ENCODE measurements at regions of chr5 and their contacts with region 1.

Region 1: DNA sequence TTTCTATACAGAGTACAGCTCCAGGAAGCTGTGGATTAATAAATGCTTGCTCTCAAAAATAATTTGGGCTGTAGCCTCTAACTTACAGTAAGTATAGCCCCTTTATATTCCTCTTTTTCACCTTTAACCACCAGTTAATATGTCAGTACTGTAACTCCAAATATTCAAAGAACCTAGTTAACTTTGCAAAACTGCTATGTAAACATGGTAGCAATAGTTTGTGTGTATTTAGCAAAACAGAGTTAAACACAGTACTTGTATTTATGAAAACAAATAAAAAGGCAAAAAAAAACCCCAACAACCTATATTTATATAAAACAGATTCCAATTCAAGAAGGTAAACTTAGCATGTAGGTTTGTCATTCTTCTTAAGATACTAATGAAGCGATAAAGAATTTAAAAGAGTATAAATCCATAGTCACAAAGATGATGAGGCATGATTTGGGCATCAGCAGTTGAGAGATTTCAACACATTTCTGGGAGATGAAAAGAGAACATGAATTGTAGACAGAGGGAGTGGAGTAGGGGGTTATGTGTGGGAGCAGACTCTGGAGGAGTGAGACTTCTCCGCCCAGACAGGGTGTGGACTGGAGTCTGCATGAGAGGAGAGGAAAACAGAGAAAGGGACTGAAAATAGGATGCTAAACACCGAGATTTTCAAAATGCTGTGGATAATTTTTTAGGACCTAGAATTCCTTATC is 47.0 kb upstream of the F2RL1 start:
- DNase-seq: no peak

Region 2: GRCh38 chr5:76601470-76601869 is 170.4 kb before region 1 on chr5:
- intact Hi-C with region 1: loop called (anchors 1 kb)
- DNase-seq: peak in 1 of 10 donors; percentile 22

Region 3: GRCh38 chr5:76801159-76801802 is 29.4 kb after region 1 on chr5:
- intact Hi-C with region 1: no loop called
- DNase-seq: no peak

Region 4: DNA sequence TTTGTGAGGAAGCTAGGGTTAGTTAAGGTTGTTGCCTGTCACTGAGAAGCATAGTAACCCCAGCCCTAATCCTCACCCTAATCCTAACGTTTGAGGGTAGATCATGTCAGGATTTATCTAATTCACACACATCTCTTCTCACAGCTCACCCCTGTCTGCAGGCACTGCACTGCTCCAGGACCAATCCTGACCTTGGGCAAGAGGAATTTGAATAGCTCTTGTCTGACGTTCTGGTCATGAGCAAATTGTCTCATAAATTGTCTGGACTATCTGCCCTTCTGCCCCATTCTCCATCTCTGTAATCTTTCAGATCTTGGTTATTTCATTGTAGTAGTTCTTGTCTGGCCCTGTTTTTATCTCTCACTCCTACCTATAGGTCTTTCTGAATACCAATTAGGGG is 199.7 kb after region 1 on chr5:
- intact Hi-C with region 1: no loop called
- DNase-seq: no peak

Measured in posterior cingulate gyrus (tissue), 11 donors.